Lower leg skin (tissue), 4 donors: ENCODE measurements at regions of chr7 and their contacts with region 1.

Region 1: GRCh38 chr7:25669961-25670841 is 441.9 kb upstream of the NPVF start:
- DNase-seq: peak; percentile 72 to 87
- H3K4me3 ChIP-seq: no peak overlapping the region
- CTCF ChIP-seq: no peak
- POLR2A ChIP-seq: no peak

Region 2: DNA sequence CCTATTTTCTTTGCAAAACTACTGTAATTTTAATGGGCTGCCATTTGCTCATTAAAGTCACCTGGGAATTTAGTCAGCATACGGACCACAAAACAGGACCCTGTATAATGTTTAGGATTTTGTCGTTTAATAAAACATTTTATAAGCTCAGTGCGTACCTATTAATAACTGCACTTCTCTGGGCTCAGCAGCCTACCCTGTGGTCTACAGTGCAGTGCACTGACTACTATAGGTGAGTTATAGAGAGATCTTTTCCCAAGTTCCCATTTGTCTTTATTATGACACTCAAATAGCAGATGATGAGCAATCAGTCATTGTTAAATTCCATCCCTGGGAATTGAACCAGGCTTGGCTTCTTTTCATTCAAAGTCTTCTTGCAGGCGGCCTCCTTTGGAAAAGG is 48.4 kb after region 1 on chr7:
- intact Hi-C with region 1: loop called (anchors 1 kb)
- DNase-seq: no peak
- H3K4me3 ChIP-seq: no peak overlapping the region
- CTCF ChIP-seq: no peak
- POLR2A ChIP-seq: no peak

Region 3: GRCh38 chr7:25926009-25926408 is 255.8 kb after region 1 on chr7:
- intact Hi-C with region 1: no loop called
- DNase-seq: no peak
- H3K4me3 ChIP-seq: no peak overlapping the region
- CTCF ChIP-seq: no peak
- POLR2A ChIP-seq: no peak